CD4-positive, alpha-beta T cell (primary cell): ENCODE measurements at regions of chr17 and their contacts with region 1.

Region 1: DNA sequence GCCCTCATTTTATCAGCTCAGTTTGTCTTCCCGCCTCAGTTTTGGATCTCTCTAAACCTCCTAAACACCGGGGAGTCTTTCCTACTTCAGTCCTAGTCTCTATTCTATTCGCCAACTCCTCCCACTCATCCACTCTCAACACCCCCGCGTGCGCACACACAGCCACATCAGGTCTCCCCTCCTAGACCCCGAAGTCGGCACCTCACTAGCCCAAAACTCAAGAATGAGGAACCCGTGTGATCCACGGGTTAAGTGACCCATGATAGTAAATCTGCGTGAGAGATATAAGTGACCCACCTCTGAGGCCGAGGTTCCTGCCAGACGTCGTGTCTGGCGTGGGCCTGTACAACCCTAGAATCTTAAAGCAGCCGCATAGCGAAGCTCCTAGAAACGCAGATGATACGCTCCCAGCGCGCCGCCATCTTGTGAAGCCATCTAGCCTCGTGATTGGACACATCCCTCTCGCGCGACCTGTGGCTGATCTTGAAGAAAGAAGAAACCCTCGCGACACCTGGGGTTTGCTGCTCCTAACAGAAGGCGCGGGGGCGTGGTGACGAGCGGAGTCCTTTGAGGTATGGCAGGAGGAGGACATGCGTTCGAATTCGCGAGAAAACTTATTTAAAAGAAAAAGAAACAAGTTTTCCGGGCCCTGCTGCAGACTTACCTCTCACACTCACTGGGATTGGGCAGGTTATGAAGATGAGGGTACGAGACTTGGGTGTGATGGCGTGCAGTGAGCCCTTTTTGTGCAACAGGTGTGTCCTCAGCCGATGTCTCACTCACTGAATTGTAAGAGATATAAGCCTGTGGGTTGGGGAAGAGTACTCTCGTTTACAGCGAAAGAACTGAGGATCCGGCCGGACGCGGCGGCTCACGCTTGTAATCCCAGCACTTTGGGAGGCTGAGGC is at the start of gene METTL16:
- DNase-seq: peak; percentile 91 to 99 (median 96)
- ATAC-seq: peak; percentile 98
- H3K4me3 ChIP-seq: peak within 1 kb of the TSS; percentile 70
- H3K4me3 Mint-ChIP-seq: no peak within 1 kb of the TSS
- H3K27ac ChIP-seq: peak within 1 kb of the TSS; percentile 92 to 96
- H3K27ac Mint-ChIP-seq: no peak within 1 kb of the TSS
- H3K4me1 ChIP-seq: peaks cover 34% of the 10 kb centered on the region
- H3K4me1 Mint-ChIP-seq: peaks cover 12% of the 10 kb centered on the region
- H3K27me3 ChIP-seq: no peaks in the 10 kb centered on the region
- H3K27me3 Mint-ChIP-seq: no peaks in the 10 kb centered on the region
- CTCF ChIP-seq: no peak
- total RNA-seq, gene METTL16: 55.7 to 58.0 TPM

Region 2: DNA sequence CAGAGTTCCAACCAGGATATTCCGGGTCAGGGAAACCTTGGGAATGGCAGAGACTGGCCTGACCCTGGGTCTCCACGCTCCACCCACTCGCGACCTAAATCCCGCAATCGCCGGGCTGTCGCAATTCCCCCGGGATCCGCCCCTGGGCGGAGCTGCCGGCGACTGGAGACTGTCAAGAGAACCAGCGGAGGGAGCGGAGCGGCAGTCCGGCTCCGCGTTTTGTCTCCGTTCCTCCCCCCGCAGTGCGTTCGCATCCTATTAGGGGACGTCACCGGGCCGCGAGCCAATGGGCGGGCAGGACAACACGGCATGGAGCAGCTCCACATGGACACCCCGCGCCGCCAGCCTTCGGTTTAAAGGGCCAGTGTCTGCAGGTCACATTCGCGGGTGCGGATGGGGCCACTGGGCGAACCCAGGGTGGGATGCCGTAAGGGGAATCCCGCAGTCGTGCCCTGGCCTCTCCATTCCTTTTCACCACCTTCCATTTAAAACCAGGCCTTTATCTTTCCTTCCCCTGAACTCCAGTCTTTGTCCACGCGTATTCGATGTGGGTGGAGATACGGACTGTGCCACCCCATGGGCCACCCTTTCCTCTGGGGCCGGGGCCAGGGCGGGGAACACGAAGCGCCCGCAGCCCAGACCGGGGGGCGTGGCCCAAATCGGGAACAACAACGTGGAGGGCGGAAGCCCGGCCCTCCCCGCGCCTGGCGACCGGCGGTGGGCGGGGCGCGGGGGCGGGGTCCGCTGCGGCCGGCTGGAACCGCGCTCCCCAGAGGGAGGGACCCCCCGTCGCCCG is 110.1 kb before region 1 on chr17:
- CTCF ChIA-PET with region 1: no interaction called
- POLR2A ChIA-PET with region 1: interaction called, 16 read pairs
- intact Hi-C with region 1: no loop called
- DNase-seq: peak; percentile 97 to 99 (median 99)
- ATAC-seq: peak; percentile 58
- H3K4me3 ChIP-seq: peak overlapping the region; percentile 93
- H3K4me3 Mint-ChIP-seq: peak overlapping the region; percentile 100
- H3K27ac ChIP-seq: peak overlapping the region; percentile 93 to 100
- H3K27ac Mint-ChIP-seq: peak overlapping the region; percentile 99
- H3K4me1 ChIP-seq: peaks cover 51% of the 10 kb centered on the region
- H3K4me1 Mint-ChIP-seq: peaks cover 47% of the 10 kb centered on the region
- H3K27me3 ChIP-seq: no peaks in the 10 kb centered on the region
- H3K27me3 Mint-ChIP-seq: no peaks in the 10 kb centered on the region
- CTCF ChIP-seq: no peak

Region 3: GRCh38 chr17:2484876-2485275 is 26.8 kb before region 1 on chr17:
- CTCF ChIA-PET with region 1: no interaction called
- POLR2A ChIA-PET with region 1: interaction called, 15 read pairs
- intact Hi-C with region 1: no loop called
- DNase-seq: no peak
- ATAC-seq: no peak
- H3K4me3 ChIP-seq: no peak overlapping the region
- H3K4me3 Mint-ChIP-seq: no peak overlapping the region
- H3K27ac ChIP-seq: no peak overlapping the region
- H3K27ac Mint-ChIP-seq: no peak overlapping the region
- H3K4me1 ChIP-seq: peaks cover 19% of the 10 kb centered on the region
- H3K4me1 Mint-ChIP-seq: peaks cover 69% of the 10 kb centered on the region
- H3K27me3 ChIP-seq: no peaks in the 10 kb centered on the region
- H3K27me3 Mint-ChIP-seq: no peaks in the 10 kb centered on the region
- CTCF ChIP-seq: no peak

Region 4: GRCh38 chr17:2580661-2581060 is 68.9 kb after region 1 on chr17:
- CTCF ChIA-PET with region 1: no interaction called
- POLR2A ChIA-PET with region 1: no interaction called
- intact Hi-C with region 1: no loop called
- DNase-seq: no peak
- ATAC-seq: no peak
- H3K4me3 ChIP-seq: no peak overlapping the region
- H3K4me3 Mint-ChIP-seq: no peak overlapping the region
- H3K27ac ChIP-seq: no peak overlapping the region
- H3K27ac Mint-ChIP-seq: no peak overlapping the region
- H3K4me1 ChIP-seq: no peaks in the 10 kb centered on the region
- H3K4me1 Mint-ChIP-seq: no peaks in the 10 kb centered on the region
- H3K27me3 ChIP-seq: no peaks in the 10 kb centered on the region
- H3K27me3 Mint-ChIP-seq: peaks cover 5% of the 10 kb centered on the region
- CTCF ChIP-seq: no peak

Region 5: GRCh38 chr17:2672026-2672425 is 160.3 kb after region 1 on chr17:
- CTCF ChIA-PET with region 1: no interaction called
- POLR2A ChIA-PET with region 1: no interaction called
- intact Hi-C with region 1: loop called (anchors 2 to 10 kb)
- DNase-seq: no peak
- ATAC-seq: no peak
- H3K4me3 ChIP-seq: no peak overlapping the region
- H3K4me3 Mint-ChIP-seq: no peak overlapping the region
- H3K27ac ChIP-seq: no peak overlapping the region
- H3K27ac Mint-ChIP-seq: no peak overlapping the region
- H3K4me1 ChIP-seq: no peaks in the 10 kb centered on the region
- H3K4me1 Mint-ChIP-seq: peaks cover 10% of the 10 kb centered on the region
- H3K27me3 ChIP-seq: no peaks in the 10 kb centered on the region
- H3K27me3 Mint-ChIP-seq: no peaks in the 10 kb centered on the region
- CTCF ChIP-seq: no peak